ENCODE measurements at regions of chr12 and their contacts with region 1.

Region 1: GRCh38 chr12:56029666-56030293 is 8.9 kb downstream of the IKZF4 start:
- DNase-seq: no peak
- H3K4me3 ChIP-seq: no peak overlapping the region
- CTCF ChIP-seq: no peak
- POLR2A ChIP-seq: no peak

Region 2: GRCh38 chr12:57519741-57520052 is 1489.9 kb after region 1 on chr12:
- intact Hi-C with region 1: loop called (anchors 5 kb)
- DNase-seq: peak in 1 of 2 donors; percentile 47
- H3K4me3 ChIP-seq: peak overlapping the region; percentile 85
- CTCF ChIP-seq: no peak
- POLR2A ChIP-seq: no peak